Aorta (tissue), 5 donors: ENCODE measurements at regions of chr12 and their contacts with region 1.

Region 1: DNA sequence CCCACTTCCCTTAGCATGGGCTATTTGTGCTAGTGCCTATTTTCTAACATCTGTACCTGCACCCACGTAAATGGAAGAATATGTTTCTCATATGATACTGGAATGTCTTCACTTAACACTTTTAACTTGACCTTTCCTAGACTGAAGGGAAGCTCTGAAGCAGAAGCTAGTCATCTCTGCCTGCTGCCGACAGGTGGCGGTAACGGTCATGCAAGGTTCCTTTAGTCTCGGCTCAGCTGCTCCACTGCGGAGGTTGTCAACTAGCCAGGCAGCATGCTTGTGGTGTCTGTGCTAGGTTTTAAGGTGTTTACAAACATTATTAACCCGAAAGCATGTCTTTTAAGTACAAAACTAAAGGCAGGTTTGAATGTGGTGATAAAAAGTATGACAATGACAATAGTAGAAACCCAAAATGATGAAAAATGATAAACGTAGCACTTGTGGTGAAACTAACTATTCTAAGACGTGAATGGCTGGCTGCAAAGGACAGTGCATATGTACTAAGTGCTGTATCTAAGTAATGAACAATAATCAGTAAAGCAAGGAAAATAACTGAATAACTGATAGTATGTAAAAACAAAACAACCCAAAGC is 117.2 kb downstream of the GRIN2B start:
- DNase-seq: peak; percentile 77 to 90
- ATAC-seq: peak; percentile 79
- H3K4me3 ChIP-seq: no peak overlapping the region
- H3K27ac ChIP-seq: no peak overlapping the region
- H3K4me1 ChIP-seq: no peaks in the 10 kb centered on the region
- H3K27me3 ChIP-seq: peaks cover 0 to 1% of the 10 kb centered on the region in 2 donors

Region 2: DNA sequence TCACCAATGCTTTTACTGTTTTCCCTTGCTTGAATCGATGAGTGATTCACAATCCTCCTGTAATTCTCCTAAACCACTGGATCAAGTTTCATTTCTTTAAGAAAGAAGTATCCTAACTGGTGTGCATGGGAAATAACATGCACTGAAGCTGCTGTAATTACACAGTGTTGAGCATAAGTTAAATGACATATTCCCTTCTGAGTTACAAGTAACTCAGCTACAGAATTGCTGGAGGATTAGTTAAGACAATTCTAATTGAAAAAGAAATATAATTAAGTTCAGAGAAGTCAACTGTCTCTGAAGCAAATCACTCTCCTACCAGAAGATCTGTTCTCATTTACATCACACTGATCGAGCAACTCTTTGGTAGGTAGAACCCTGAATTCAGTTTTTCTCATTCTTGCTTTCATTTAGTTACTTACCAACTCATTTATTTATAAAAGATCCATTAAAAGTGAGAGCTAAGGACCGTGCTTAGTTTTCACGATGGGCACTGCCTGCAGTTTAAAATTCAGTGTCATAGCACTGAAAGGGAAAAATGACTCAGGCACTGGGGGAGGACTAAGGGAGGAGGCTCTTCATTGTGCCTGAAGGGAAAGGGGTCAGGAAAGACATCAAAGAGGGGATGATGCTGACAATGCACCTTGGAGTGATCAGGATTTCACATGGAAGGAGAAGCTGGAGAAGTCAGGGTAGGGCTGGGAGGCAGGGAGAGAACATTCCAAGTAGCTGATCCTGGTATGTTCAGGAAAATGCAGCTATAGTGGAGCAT is 340.5 kb before region 1 on chr12:
- intact Hi-C with region 1: no loop called
- DNase-seq: no peak
- ATAC-seq: no peak
- H3K4me3 ChIP-seq: no peak overlapping the region
- H3K27ac ChIP-seq: no peak overlapping the region
- H3K4me1 ChIP-seq: no peaks in the 10 kb centered on the region
- H3K27me3 ChIP-seq: no peaks in the 10 kb centered on the region

Region 3: DNA sequence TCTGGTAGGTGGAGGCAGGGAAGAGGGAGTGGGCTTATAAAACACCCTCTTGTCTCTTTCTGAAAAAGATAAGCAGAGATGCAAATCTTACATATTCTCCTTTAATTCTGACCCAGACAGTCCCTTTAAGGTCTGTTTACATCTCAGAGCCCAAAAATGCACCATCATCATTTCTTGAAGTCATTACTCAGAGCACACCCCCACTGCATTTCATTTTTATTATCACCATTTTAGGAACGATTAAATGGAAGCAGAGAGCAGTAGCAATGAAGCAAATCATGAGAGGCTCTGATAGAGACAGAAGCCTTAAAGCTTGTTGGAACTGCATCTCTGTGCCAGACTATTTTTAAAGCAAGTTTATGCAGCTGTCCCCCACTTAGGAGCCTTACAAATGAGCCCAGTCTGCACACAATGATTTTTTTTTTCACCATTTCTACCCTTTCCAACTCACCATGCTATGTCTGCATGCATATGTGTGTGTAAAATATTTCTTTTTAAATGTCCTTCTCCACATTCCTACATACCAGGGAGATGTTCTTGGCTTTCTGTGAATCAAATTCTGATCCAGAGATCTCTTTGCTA is 193.8 kb before region 1 on chr12:
- intact Hi-C with region 1: no loop called
- DNase-seq: no peak
- ATAC-seq: no peak
- H3K4me3 ChIP-seq: no peak overlapping the region
- H3K27ac ChIP-seq: no peak overlapping the region
- H3K4me1 ChIP-seq: no peaks in the 10 kb centered on the region
- H3K27me3 ChIP-seq: no peaks in the 10 kb centered on the region

Region 4: GRCh38 chr12:13745111-13745685 is 119.0 kb before region 1 on chr12:
- intact Hi-C with region 1: no loop called
- DNase-seq: no peak
- ATAC-seq: no peak
- H3K4me3 ChIP-seq: no peak overlapping the region
- H3K27ac ChIP-seq: no peak overlapping the region
- H3K4me1 ChIP-seq: peaks cover 0 to 2% of the 10 kb centered on the region in 2 donors
- H3K27me3 ChIP-seq: no peaks in the 10 kb centered on the region

Region 5: GRCh38 chr12:14167005-14167628 is 302.9 kb after region 1 on chr12:
- intact Hi-C with region 1: loop called (anchors 5 to 10 kb)
- DNase-seq: no peak
- ATAC-seq: no peak
- H3K4me3 ChIP-seq: no peak overlapping the region
- H3K27ac ChIP-seq: no peak overlapping the region
- H3K4me1 ChIP-seq: no peaks in the 10 kb centered on the region
- H3K27me3 ChIP-seq: no peaks in the 10 kb centered on the region